CD4-positive, alpha-beta T cell (primary cell): ENCODE measurements at regions of chr18 and their contacts with region 1.

Region 1: GRCh38 chr18:76932026-76932819 is 109.9 kb downstream of the ZNF236 start:
- DNase-seq: no peak
- ATAC-seq: no peak
- H3K4me3 ChIP-seq: no peak overlapping the region
- H3K4me3 Mint-ChIP-seq: no peak overlapping the region
- H3K27ac ChIP-seq: no peak overlapping the region
- H3K27ac Mint-ChIP-seq: no peak overlapping the region
- H3K4me1 ChIP-seq: no peaks in the 10 kb centered on the region
- H3K4me1 Mint-ChIP-seq: peaks cover 5% of the 10 kb centered on the region
- H3K27me3 ChIP-seq: no peaks in the 10 kb centered on the region
- H3K27me3 Mint-ChIP-seq: no peaks in the 10 kb centered on the region
- CTCF ChIP-seq: no peak

Region 2: GRCh38 chr18:77899972-77900754 is 967.9 kb after region 1 on chr18:
- CTCF ChIA-PET with region 1: no interaction called
- POLR2A ChIA-PET with region 1: no interaction called
- intact Hi-C with region 1: loop called in 1 of 2 experiments (anchors 5 kb)
- DNase-seq: peak; percentile 12 to 77 (median 40)
- ATAC-seq: peak; percentile 97
- H3K4me3 ChIP-seq: peak overlapping the region; percentile 26
- H3K4me3 Mint-ChIP-seq: peak overlapping the region; percentile 60
- H3K27ac ChIP-seq: no peak overlapping the region
- H3K27ac Mint-ChIP-seq: no peak overlapping the region
- H3K4me1 ChIP-seq: peaks cover 9% of the 10 kb centered on the region
- H3K4me1 Mint-ChIP-seq: no peaks in the 10 kb centered on the region
- H3K27me3 ChIP-seq: no peaks in the 10 kb centered on the region
- H3K27me3 Mint-ChIP-seq: peaks cover 20% of the 10 kb centered on the region
- CTCF ChIP-seq: peak; percentile 73